Lower leg skin (tissue), 4 donors: ENCODE measurements at regions of chr17 and their contacts with region 1.

Region 1: GRCh38 chr17:19517699-19518098 is 16.0 kb upstream of the SLC47A1 start:
- DNase-seq: no peak
- H3K4me3 ChIP-seq: no peak overlapping the region
- CTCF ChIP-seq: no peak
- POLR2A ChIP-seq: no peak

Region 2: DNA sequence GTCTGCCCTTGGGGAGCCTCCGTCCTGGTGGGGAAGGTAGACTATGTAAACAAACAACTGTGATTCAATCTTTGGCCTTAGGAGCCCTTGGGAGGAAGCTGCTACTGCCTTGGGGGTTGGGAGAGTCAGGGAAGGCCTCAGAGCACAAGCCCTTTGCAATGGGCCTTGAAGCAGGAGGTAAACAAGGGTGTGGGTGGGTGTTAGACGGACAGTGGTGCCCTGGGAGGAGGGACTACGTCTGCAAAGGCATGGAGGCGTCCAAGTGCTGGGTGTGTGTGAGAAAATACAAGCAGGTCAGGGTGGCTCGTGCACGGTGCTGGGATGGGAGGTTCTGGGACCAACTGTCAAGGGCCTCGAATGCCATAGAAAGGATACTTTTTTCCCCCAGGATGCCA is 506.6 kb before region 1 on chr17:
- intact Hi-C with region 1: no loop called
- DNase-seq: no peak
- H3K4me3 ChIP-seq: no peak overlapping the region
- CTCF ChIP-seq: no peak
- POLR2A ChIP-seq: no peak

Region 3: GRCh38 chr17:19766422-19767270 is 248.9 kb after region 1 on chr17:
- intact Hi-C with region 1: loop called (anchors 5 kb)
- DNase-seq: peak; percentile 62 to 93
- H3K4me3 ChIP-seq: no peak overlapping the region
- CTCF ChIP-seq: peak in 1 of 3 donors; percentile 60
- POLR2A ChIP-seq: no peak